T-cell (primary cell): ENCODE measurements at regions of chr2 and their contacts with region 1.

Region 1: DNA sequence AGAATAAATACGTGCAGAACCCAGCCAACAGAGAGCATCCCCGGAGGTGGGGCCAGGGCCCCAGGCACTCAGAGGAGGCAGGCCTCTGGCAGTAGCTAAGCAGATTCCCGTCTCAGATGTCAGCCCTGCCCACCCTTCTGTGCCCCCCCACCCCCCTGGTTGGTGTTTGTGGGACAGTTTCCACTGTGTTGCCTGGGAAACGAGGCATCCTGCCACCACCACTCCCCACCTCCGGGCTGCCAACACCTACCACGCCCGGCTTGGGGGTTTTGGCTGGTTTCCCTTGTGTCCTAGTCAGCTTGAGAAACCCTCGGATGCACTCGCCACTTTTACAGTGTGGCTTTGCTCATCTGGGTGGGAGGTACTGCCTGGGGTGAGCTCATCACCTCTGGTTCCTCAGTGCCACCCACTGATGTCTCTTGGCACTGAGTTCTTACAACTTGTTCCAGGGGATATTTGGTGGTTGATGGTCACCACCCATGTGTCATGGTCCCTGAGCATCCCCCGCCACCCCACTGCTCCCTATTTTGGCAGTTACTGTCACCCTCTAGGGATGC is 72.4 kb upstream of the YWHAQ start:
- DNase-seq: peak; percentile 52 to 96 (median 89)
- ATAC-seq: peak; percentile 84 to 93 (median 88)
- H3K4me3 ChIP-seq: no peak overlapping the region
- H3K4me3 Mint-ChIP-seq: peak overlapping the region in 1 of 3 donors; percentile 50
- H3K27ac ChIP-seq: peak overlapping the region; percentile 94
- H3K27ac Mint-ChIP-seq: peak overlapping the region; percentile 76 to 87
- H3K4me1 ChIP-seq: peaks cover 0 to 43% of the 10 kb centered on the region in 2 experiments
- H3K4me1 Mint-ChIP-seq: peaks cover 16 to 53% (median 34%) of the 10 kb centered on the region in 3 donors
- H3K27me3 ChIP-seq: no peaks in the 10 kb centered on the region
- H3K27me3 Mint-ChIP-seq: no peaks in the 10 kb centered on the region

Region 2: DNA sequence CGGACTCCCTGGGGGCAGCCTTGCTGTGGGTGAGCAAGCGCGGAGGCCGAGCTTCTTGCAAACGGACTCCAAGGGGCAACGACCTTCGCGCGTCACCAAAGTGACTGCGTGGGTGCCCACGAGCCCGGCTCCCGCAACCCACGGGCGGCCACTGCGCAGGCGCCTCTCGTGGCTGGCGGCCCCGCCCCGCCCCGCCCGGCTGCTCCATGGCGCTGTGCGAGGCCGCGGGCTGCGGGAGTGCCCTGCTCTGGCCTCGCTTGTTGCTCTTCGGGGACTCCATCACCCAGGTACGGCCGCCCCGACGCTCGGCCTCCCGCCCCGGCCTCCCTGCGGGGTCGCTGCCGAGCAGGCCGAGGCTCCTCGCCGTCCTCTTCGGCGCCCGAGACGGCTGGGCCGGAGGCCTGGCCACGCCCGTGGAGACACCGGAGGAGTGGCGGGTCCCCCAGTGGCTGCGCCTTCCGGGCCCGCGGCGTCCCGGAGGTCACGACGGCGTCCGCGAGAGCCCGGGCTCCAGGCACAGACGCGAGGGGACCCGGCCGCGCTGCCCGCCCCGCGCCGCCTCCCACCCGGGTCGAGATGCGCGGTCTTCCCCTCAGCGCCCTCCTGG is 228.7 kb before region 1 on chr2 and contains the start of gene IAH1:
- CTCF ChIA-PET with region 1: no interaction called
- POLR2A ChIA-PET with region 1: no interaction called
- DNase-seq: peak in 34 of 35 experiments; percentile 34 to 86 (median 70)
- ATAC-seq: peak; percentile 83 to 91 (median 86)
- H3K4me3 ChIP-seq: peak within 1 kb of the TSS; percentile 76 to 91
- H3K4me3 Mint-ChIP-seq: peak within 1 kb of the TSS; percentile 76 to 84 (median 80)
- H3K27ac ChIP-seq: peak within 1 kb of the TSS; percentile 96
- H3K27ac Mint-ChIP-seq: peak within 1 kb of the TSS; percentile 83 to 89
- H3K4me1 ChIP-seq: peaks cover 3 to 38% of the 10 kb centered on the region in 2 experiments
- H3K4me1 Mint-ChIP-seq: peaks cover 49 to 54% (median 53%) of the 10 kb centered on the region in 3 donors
- H3K27me3 ChIP-seq: no peaks in the 10 kb centered on the region
- H3K27me3 Mint-ChIP-seq: no peaks in the 10 kb centered on the region
- total RNA-seq, gene IAH1: 44.9 to 54.8 (median 51.9) TPM

Region 3: GRCh38 chr2:9618410-9618809 is 84.8 kb before region 1 on chr2:
- CTCF ChIA-PET with region 1: interaction called in 1 of 2 experiments, 12 read pairs
- POLR2A ChIA-PET with region 1: no interaction called
- DNase-seq: peak in 27 of 35 experiments; percentile 12 to 62 (median 31)
- ATAC-seq: peak; percentile 86 to 91 (median 90)
- H3K4me3 ChIP-seq: no peak overlapping the region
- H3K4me3 Mint-ChIP-seq: peak overlapping the region; percentile 30 to 72 (median 65)
- H3K27ac ChIP-seq: peak overlapping the region; percentile 50
- H3K27ac Mint-ChIP-seq: peak overlapping the region; percentile 87 to 89
- H3K4me1 ChIP-seq: peaks cover 9% of the 10 kb centered on the region in 2 experiments
- H3K4me1 Mint-ChIP-seq: peaks cover 86 to 94% (median 93%) of the 10 kb centered on the region in 3 donors
- H3K27me3 ChIP-seq: no peaks in the 10 kb centered on the region
- H3K27me3 Mint-ChIP-seq: no peaks in the 10 kb centered on the region